Sigmoid colon (tissue), 7 donors: ENCODE measurements at regions of chr20 and their contacts with region 1.

Region 1: DNA sequence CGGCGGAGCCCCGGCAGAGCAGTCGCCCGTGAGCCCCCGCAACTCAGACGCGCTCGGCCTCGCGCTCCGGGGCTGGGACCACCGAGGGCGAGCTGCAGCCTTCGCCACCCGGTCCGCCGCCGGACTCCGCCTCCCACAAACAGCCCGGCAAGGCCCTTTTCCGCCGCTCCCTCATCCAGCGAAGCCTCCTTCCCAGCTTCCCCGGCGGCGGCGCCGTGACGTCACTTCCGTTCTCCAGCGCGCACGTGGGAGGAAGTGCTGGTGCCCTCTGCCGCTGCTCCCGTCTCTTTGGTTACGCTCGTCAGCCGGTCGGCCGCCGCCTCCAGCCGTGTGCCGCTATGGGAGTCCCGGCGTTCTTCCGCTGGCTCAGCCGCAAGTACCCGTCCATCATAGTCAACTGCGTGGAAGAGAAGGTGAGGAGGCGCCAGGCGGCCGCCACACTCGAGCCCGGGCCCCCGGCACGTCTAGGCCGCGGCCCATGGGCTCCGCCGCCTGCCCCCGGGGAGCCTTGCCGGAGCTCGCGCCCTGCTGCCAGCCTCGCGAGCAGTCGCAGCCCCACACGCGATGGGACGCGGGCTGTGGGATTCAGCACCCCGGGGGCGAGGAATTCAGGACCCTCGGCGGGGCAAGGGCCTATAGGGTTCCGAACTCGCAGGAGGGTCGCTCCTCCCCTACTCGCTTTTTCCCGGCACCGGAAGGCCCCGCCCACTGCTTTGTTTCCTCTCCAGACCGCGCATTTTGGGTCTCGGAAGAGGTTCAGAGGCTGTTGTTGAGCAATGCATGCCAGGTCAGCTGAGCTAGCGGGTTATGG is at the start of gene XRN2:
- DNase-seq: peak; percentile 98
- H3K4me3 ChIP-seq: peak within 1 kb of the TSS; percentile 76 to 98 (median 92)
- H3K27ac ChIP-seq: peak within 1 kb of the TSS; percentile 91 to 98 (median 94)
- H3K4me1 ChIP-seq: peaks cover 0 to 24% (median 17%) of the 10 kb centered on the region in 4 donors
- H3K27me3 ChIP-seq: no peaks in the 10 kb centered on the region
- CTCF ChIP-seq: no peak
- EP300 ChIP-seq: no peak
- POLR2A ChIP-seq: peak; percentile 66 to 77
- total RNA-seq, gene XRN2: 53.5 to 79.8 (median 66.1) TPM

Region 2: DNA sequence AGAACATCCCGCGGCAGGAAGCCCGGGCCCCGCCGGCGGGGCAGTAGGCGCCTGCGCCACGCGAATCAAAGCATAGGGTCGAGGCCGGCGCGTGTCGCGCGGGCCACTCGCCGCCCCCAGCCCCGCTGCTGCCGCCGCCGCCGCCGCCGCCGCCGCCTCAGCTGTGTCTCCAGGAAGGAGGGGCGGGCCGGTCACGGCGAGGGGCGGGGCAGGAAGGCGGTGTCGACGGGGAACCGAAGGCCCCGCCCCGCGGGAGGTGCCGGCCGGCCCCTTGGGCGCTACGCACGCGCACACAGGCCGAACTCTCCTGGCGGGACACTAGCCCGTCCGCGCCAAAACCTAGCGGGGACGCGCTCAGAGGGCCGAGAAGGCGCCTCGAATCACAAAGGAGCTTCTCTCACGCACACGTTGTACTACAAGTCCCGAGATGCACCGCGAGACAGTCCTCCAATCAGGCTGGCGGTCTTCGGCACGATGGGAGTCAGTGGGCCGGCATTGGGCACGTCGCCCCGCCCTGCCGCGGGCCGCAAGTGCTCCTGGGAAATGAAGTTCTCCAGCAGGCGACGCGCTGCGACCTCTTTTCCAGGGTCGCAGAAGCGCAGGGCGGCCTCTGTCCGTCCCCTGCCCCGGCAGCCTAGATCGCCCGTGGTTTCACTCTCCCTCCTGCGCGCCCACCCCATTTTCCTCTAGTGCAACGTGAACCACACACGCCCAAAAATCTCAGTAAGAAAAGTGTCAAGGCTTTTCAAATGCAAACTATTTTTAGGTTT is 590.6 kb before region 1 on chr20 and contains the start of gene RALGAPA2:
- intact Hi-C with region 1: loop called (anchors 5 kb)
- DNase-seq: peak; percentile 99
- H3K4me3 ChIP-seq: peak within 1 kb of the TSS; percentile 69 to 98 (median 76)
- H3K27ac ChIP-seq: peak within 1 kb of the TSS; percentile 82 to 95 (median 87)
- H3K4me1 ChIP-seq: peaks cover 0 to 28% (median 26%) of the 10 kb centered on the region in 4 donors
- H3K27me3 ChIP-seq: no peaks in the 10 kb centered on the region
- CTCF ChIP-seq: no peak
- EP300 ChIP-seq: no peak
- POLR2A ChIP-seq: no peak
- total RNA-seq, gene RALGAPA2: 17.7 to 19.9 (median 18.8) TPM

Region 3: DNA sequence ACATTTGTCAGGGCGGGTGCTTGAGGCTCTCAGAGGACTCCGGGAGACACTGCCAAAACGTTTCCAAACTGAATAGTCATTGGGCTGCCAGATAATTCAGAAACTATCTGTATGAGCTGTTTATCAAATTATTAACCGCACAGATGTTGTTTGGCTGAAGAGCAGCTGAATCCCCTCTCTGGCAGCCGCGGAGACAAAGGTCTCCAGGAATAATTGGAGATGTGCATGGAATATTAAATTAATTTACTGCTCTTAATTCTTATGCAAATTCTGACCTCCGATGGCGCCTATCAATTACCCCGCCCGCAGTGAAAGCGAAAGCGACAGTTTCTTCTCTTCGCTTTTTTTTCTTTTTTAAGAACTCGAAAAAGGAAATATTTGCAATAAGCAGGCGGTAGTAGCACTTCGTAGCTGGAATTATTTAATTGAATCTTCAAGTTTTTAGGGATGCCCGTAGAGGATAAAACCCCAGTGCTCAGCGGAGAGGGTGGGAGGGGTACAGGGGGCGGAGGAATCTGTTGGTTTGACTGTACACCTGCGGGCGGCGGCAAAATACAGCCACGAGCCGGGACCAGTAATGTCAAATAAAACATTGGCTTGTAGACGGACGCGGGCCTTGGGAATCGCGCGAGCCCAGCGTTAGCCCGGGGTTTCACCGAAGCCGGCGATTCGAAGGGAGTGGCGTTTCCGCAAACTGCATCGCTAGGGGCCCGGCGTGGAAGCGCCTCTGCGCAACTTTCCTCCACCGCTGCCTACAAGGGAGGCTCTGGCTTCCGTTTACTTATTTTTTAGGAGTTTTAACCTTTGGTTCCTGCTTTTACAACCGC is 203.3 kb before region 1 on chr20:
- intact Hi-C with region 1: loop called (anchors 5 kb)
- DNase-seq: no peak
- H3K4me3 ChIP-seq: peak overlapping the region; percentile 1 to 44 (median 36)
- H3K27ac ChIP-seq: peak overlapping the region in 1 of 4 donors; percentile 1
- H3K4me1 ChIP-seq: peaks cover 0 to 43% (median 39%) of the 10 kb centered on the region in 4 donors
- H3K27me3 ChIP-seq: peaks cover 62 to 89% (median 81%) of the 10 kb centered on the region in 3 donors
- CTCF ChIP-seq: no peak
- EP300 ChIP-seq: no peak
- POLR2A ChIP-seq: no peak

Region 4: DNA sequence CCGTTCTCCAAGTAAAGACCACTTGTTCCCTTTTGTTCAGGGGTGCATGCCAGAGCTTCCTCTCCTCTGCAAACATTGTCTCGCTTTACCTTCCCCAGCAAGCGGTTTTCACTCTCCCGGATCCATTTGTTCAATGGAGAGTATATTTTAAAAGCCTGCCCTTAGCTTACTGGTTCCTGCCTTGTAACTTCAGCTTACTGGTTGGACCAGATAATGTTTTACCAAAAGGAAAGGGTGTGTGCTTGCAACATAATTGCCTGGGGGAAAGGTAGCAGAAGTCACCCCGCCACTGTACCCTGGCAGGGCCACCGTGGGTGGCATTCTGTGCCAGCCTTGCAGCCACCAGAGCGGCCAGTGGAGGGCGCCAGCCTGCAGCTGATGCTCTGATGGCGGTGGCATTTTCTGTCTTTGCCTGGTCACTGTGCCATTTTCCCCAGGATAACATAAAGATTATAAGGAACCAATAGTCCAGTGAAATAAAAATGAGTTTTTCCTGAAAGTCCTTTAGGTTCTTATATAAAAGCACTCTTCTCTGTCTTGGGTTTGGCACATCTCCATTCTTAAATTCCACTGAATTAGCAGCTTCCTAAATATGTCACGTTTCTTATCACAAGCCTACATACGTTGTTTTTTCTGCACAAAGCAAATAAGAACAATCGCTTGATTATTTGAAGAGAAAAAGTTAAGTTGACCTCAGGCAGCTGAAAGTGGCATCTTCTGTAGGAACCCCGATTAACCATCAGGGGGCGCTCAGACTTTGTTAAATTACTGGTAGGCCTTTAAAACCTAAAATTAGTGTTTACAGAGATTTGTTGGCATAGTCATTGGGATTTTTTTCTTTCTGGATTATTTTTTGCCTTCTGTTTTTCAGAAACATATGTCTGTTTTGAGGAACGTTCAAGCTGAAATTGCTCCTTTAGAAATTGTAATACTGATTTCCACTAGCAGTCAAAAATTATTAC is 67.5 kb before region 1 on chr20:
- intact Hi-C with region 1: loop called (anchors 5 kb)
- DNase-seq: no peak
- H3K4me3 ChIP-seq: no peak overlapping the region
- H3K27ac ChIP-seq: peak overlapping the region in 2 of 4 donors; percentile 27 to 30
- H3K4me1 ChIP-seq: peaks cover 0 to 13% (median 2%) of the 10 kb centered on the region in 4 donors
- H3K27me3 ChIP-seq: no peaks in the 10 kb centered on the region
- CTCF ChIP-seq: peak; percentile 19 to 73 (median 46)
- EP300 ChIP-seq: no peak
- POLR2A ChIP-seq: no peak

Region 5: GRCh38 chr20:21395666-21396598 is 92.7 kb after region 1 on chr20:
- intact Hi-C with region 1: loop called (anchors 5 kb)
- DNase-seq: no peak
- H3K4me3 ChIP-seq: peak overlapping the region in 3 of 4 donors; percentile 5 to 25 (median 13)
- H3K27ac ChIP-seq: no peak overlapping the region
- H3K4me1 ChIP-seq: peaks cover 0 to 26% (median 15%) of the 10 kb centered on the region in 4 donors
- H3K27me3 ChIP-seq: peaks cover 73 to 100% (median 96%) of the 10 kb centered on the region in 3 donors
- CTCF ChIP-seq: no peak
- EP300 ChIP-seq: no peak
- POLR2A ChIP-seq: no peak

Region 6: GRCh38 chr20:21453680-21454079 is 150.4 kb after region 1 on chr20:
- intact Hi-C with region 1: no loop called
- DNase-seq: no peak
- H3K4me3 ChIP-seq: no peak overlapping the region
- H3K27ac ChIP-seq: no peak overlapping the region
- H3K4me1 ChIP-seq: no peaks in the 10 kb centered on the region
- H3K27me3 ChIP-seq: no peaks in the 10 kb centered on the region
- CTCF ChIP-seq: no peak
- EP300 ChIP-seq: no peak
- POLR2A ChIP-seq: no peak